ENCODE measurements at regions of chr16 and their contacts with region 1.

Region 1: DNA sequence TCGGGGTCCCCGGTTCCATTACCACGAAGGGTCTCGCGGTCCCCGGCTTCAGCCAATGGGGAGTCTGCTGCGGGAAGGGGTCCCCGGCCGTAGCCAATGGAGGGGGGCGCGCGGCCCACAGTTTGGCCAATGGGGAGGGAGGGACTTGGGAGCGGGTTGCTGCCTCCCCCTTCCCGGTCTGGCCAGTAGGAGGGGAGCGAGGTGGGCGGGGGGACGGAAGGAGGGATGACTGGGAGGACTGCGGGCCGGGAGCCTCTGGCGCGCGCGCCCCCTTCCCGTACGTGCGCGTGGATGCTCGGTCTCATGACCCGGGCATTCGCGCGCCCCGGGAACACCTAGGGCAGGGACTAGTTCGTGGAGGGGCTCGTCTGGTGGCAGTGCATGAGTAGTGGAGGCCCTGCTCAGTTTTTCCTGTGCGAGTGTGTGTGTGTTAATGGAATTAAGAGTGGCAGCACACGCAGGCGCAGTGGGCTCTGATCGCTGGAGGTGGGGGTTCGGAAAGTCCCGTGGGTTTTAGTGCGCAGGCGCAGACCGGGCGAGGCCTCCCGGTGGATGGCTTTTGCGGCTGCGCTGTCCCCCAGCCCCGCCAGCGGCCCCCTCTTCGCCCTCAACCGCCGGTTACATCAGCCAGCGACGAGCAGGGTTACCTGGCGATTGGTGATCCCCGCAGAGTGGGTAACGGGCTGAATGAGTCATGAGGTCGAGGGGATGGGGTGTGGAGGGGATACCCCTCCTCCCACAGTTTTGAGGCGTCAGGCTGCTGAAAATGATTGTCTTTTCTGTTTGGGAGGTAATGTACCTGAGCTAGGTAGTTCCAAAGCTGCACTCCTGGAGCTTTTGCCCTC is 1.3 kb downstream of the ATXN2L start:
- DNase-seq: peak; percentile 88
- ATAC-seq: peak; percentile 72
- H3K4me3 ChIP-seq: peak overlapping the region; percentile 96
- H3K27ac ChIP-seq: peak overlapping the region; percentile 86
- H3K4me1 ChIP-seq: peaks cover 22% of the 10 kb centered on the region
- H3K27me3 ChIP-seq: no peaks in the 10 kb centered on the region
- CTCF ChIP-seq: no peak

Region 2: GRCh38 chr16:28910086-28911031 is 86.3 kb after region 1 on chr16:
- CTCF ChIA-PET with region 1: no interaction called
- POLR2A ChIA-PET with region 1: no interaction called
- intact Hi-C with region 1: no loop called
- DNase-seq: peak; percentile 78
- ATAC-seq: peak; percentile 68
- H3K4me3 ChIP-seq: no peak overlapping the region
- H3K27ac ChIP-seq: peak overlapping the region; percentile 90
- H3K4me1 ChIP-seq: peaks cover 8% of the 10 kb centered on the region
- H3K27me3 ChIP-seq: no peaks in the 10 kb centered on the region
- CTCF ChIP-seq: no peak

Region 3: DNA sequence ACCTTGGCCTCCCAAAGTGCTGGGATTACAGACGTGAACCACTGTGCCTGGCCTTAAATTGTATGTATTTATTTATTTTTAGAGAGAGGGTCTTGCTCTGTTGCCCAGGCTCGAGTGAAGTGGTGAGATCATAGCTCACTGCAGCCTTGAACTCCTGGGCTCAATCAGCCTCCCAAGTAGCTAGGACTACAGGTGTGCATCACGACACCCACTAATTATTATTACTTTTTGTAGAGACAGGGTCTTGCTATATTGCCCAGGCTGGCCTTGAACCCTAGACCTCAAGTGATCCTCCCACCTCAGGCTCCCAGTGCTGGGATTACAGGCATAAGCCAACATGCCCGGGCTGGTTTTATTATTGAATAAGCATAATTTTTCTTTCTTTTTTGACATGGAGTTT is 122.6 kb after region 1 on chr16:
- CTCF ChIA-PET with region 1: no interaction called
- POLR2A ChIA-PET with region 1: no interaction called
- intact Hi-C with region 1: loop called (anchors 5 kb)
- DNase-seq: no peak
- ATAC-seq: no peak
- H3K4me3 ChIP-seq: no peak overlapping the region
- H3K27ac ChIP-seq: no peak overlapping the region
- H3K4me1 ChIP-seq: peaks cover 10% of the 10 kb centered on the region
- H3K27me3 ChIP-seq: no peaks in the 10 kb centered on the region
- CTCF ChIP-seq: no peak